HCT116 (cell line): ENCODE measurements at regions of chr11 and their contacts with region 1.

Region 1: GRCh38 chr11:128884703-128885338 is 6.3 kb upstream of the KCNJ5 start:
- DNase-seq: peak; percentile 63
- ATAC-seq: peak; percentile 82
- H3K4me3 ChIP-seq: no peak overlapping the region
- H3K27ac ChIP-seq: no peak overlapping the region
- H3K4me1 ChIP-seq: peaks cover 0 to under 1% of the 10 kb centered on the region in 2 experiments; a peak in 1 of 4 replicates
- H3K27me3 ChIP-seq: no peaks in the 10 kb centered on the region
- CTCF ChIP-seq: peak; percentile 62 to 95 (median 81); a peak in 5 of 6 replicates
- POLR2A ChIP-seq: no peak
- RAD21 ChIP-seq: peak; percentile 98

Region 2: GRCh38 chr11:128905345-128906184 is 20.7 kb after region 1 on chr11:
- CTCF ChIA-PET with region 1: interaction called, 55 read pairs
- POLR2A ChIA-PET with region 1: interaction called, 3 read pairs
- RAD21 ChIA-PET with region 1: interaction called in 1 of 2 experiments, 3 read pairs
- intact Hi-C with region 1: loop called (anchors 2 kb)
- DNase-seq: peak; percentile 46
- ATAC-seq: peak; percentile 75
- H3K4me3 ChIP-seq: peak overlapping the region; percentile 58 to 69
- H3K27ac ChIP-seq: peak overlapping the region; percentile 23; the same call in 1 of the 2 replicates
- H3K4me1 ChIP-seq: peaks cover 23 to 42% of the 10 kb centered on the region in 2 experiments
- H3K27me3 ChIP-seq: no peaks in the 10 kb centered on the region
- CTCF ChIP-seq: peak; percentile 24 to 70 (median 61); a peak in 5 of 6 replicates
- POLR2A ChIP-seq: no peak
- RAD21 ChIP-seq: peak; percentile 35

Region 3: GRCh38 chr11:128937480-128937879 is 52.7 kb after region 1 on chr11:
- CTCF ChIA-PET with region 1: no interaction called
- POLR2A ChIA-PET with region 1: no interaction called
- RAD21 ChIA-PET with region 1: no interaction called
- intact Hi-C with region 1: no loop called
- DNase-seq: no peak
- ATAC-seq: no peak
- H3K4me3 ChIP-seq: no peak overlapping the region
- H3K27ac ChIP-seq: no peak overlapping the region
- H3K4me1 ChIP-seq: no peaks in the 10 kb centered on the region
- H3K27me3 ChIP-seq: no peaks in the 10 kb centered on the region
- CTCF ChIP-seq: no peak
- POLR2A ChIP-seq: no peak
- RAD21 ChIP-seq: no peak

Region 4: GRCh38 chr11:128956401-128957201 is 71.8 kb after region 1 on chr11:
- CTCF ChIA-PET with region 1: interaction called, 213 read pairs
- POLR2A ChIA-PET with region 1: interaction called, 5 read pairs
- RAD21 ChIA-PET with region 1: interaction called, 11 to 22 read pairs
- intact Hi-C with region 1: loop called (anchors 1 kb)
- DNase-seq: peak; percentile 73
- ATAC-seq: peak; percentile 94
- H3K4me3 ChIP-seq: no peak overlapping the region
- H3K27ac ChIP-seq: no peak overlapping the region
- H3K4me1 ChIP-seq: no peaks in the 10 kb centered on the region
- H3K27me3 ChIP-seq: no peaks in the 10 kb centered on the region
- CTCF ChIP-seq: peak; percentile 58 to 95 (median 76)
- POLR2A ChIP-seq: no peak
- RAD21 ChIP-seq: peak; percentile 94

Region 5: DNA sequence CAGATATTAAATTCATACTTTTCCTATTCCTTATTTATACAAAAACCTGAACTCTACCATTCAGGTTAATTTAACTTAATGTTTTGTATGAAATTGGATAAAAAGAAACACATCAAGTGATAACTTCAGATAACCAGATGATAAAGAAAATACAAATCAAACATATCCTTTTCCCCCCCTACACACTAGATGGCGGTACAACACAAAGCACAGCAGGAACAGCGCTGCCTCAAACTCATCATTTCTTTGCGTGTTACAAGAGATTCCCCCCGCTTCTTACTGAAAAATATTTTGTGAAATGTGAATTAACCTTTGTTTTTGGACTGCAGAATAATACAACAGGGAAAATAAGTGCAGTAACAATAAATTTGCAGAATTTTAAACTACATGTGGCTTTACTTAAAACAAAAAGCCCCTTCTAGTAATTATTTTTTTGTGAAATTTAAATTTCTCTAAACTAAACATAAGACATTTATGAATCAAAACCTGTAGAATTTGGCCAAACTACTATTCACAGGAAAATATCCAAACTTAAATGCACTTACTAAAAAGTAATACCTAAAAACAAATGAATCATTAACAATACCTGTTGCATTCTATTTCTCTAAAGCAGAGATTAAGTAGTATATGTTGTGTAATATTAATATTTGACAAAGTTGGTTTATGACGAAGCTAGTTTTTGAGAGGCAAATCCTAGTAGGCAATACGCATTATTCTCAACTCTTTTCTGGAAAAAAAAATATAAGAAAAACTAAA is 233.0 kb after region 1 on chr11:
- CTCF ChIA-PET with region 1: no interaction called
- POLR2A ChIA-PET with region 1: no interaction called
- RAD21 ChIA-PET with region 1: no interaction called
- intact Hi-C with region 1: loop called (anchors 2 kb)
- DNase-seq: peak; percentile 63
- ATAC-seq: peak; percentile 67; the same call in 1 of the 2 replicates
- H3K4me3 ChIP-seq: no peak overlapping the region
- H3K27ac ChIP-seq: no peak overlapping the region
- H3K4me1 ChIP-seq: peaks cover 5 to 12% of the 10 kb centered on the region in 2 experiments; a peak in 3 of 4 replicates
- H3K27me3 ChIP-seq: no peaks in the 10 kb centered on the region
- CTCF ChIP-seq: peak; percentile 71 to 95 (median 92)
- POLR2A ChIP-seq: no peak
- RAD21 ChIP-seq: peak; percentile 97

Region 6: GRCh38 chr11:129750349-129751292 is 865.8 kb after region 1 on chr11:
- CTCF ChIA-PET with region 1: no interaction called
- POLR2A ChIA-PET with region 1: no interaction called
- RAD21 ChIA-PET with region 1: no interaction called
- intact Hi-C with region 1: loop called (anchors 1 kb)
- DNase-seq: peak; percentile 74
- ATAC-seq: peak; percentile 98
- H3K4me3 ChIP-seq: no peak overlapping the region
- H3K27ac ChIP-seq: no peak overlapping the region
- H3K4me1 ChIP-seq: peaks cover 0 to 5% of the 10 kb centered on the region in 2 experiments; a peak in 2 of 4 replicates
- H3K27me3 ChIP-seq: no peaks in the 10 kb centered on the region
- CTCF ChIP-seq: peak; percentile 75 to 99 (median 91)
- POLR2A ChIP-seq: no peak
- RAD21 ChIP-seq: peak; percentile 97